ENCODE measurements at regions of chr13 and their contacts with region 1.

Region 1: DNA sequence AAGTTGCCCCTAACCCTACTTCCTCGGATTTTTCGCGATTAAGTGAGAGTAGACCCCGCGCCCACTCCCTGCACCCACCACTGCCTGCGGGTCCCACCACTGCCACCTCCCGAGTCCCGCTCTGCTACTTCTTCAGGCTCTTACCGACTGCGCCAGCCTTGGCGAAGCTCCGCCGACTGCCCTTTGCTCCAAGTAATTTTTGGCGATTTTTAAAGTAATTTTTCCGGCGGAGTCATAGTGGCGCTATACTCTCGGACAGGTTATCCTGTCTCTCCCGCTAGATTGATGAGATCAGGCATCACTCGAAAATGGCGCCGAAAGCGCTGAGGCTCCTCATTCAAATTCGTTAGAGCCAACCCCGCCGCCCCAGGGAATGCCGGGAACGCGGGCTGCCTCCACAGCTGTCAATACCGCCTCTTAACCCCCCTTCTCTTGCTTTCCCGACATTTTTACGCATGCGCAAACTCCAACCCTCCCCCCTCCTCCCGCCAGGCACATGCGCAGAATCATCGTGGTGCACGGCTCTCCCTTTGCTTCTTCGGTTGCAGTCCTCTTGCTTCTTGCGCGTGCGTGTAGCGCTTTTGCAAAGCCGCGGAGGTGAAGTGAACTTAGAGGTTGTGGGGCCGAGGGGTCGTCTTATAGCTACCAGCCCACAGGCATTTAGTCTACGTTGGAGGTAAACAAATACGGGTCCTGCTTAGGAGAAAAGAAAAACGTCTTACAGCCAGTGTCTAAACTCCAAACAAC is 66.6 kb downstream of the KCNRG start:
- DNase-seq: peak; percentile 99
- H3K4me3 Mint-ChIP-seq: peak overlapping the region; percentile 98
- H3K27ac Mint-ChIP-seq: peak overlapping the region; percentile 99
- H3K4me1 Mint-ChIP-seq: peaks cover 41% of the 10 kb centered on the region
- H3K27me3 Mint-ChIP-seq: no peaks in the 10 kb centered on the region

Region 2: DNA sequence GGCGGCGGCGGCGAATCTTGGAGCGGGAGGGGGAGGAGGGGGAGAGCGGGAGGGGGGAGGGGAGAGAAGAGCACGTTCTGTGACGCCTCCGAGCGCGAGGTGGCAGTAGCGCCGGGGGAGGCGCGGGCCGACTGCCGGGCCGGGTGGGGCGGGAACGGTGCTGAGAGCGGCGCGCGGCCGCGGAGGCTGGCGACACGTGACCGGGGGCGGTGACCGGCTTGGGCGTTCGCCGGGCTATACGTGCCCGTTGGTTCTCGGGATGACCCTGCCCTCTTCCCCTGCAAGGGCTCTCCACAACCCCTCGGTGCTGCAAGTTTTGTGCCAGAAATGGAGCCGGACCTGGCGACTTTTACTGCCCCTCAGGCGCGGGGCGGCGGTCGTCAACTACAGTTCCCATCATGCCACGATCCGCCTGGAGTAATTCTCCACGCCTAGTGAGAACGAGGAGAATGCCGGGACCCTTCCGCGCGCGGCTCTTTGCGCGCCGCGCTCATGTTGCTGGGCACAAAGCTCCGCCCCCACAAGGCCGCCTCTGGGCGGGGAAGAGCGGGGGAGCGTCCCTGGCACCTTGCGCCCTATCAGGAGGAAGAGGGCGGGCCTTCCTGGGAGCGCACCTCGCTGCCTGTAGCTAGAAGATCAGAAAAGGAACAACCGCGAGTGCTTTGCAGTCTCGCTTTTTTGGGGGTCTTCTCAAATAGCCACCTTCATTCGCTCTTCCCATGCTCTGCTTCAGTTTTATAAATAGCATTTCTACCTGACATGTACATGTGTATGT is 289.1 kb before region 1 on chr13 and contains the start of gene KPNA3:
- CTCF ChIA-PET with region 1: no interaction called
- POLR2A ChIA-PET with region 1: interaction called, 18 read pairs
- DNase-seq: peak; percentile 96
- H3K4me3 Mint-ChIP-seq: peak within 1 kb of the TSS; percentile 95
- H3K27ac Mint-ChIP-seq: peak within 1 kb of the TSS; percentile 97
- H3K4me1 Mint-ChIP-seq: peaks cover 32% of the 10 kb centered on the region
- H3K27me3 Mint-ChIP-seq: peaks cover 4% of the 10 kb centered on the region
- total RNA-seq, gene KPNA3: 34.9 to 36.1 TPM

Region 3: DNA sequence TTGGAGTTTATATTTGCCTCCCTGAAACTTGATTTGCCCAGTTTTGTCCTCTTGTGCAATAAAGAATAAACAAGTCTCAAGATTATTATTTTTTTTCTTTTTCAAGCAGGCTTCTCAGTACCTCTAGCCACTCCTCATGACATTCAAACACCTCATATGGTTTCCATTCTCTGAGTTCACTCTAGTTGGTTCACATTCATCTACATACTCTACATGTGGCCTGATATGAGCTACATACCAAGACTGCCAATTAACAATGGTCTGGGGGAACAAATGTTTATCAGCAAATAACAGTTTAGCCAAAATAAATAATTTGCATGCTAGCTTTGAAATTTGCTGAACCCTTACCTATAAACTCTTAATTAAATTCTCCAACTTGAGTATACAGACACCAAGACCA is 44.1 kb before region 1 on chr13:
- CTCF ChIA-PET with region 1: no interaction called
- POLR2A ChIA-PET with region 1: interaction called, 10 read pairs
- DNase-seq: no peak
- H3K4me3 Mint-ChIP-seq: no peak overlapping the region
- H3K27ac Mint-ChIP-seq: no peak overlapping the region
- H3K4me1 Mint-ChIP-seq: no peaks in the 10 kb centered on the region
- H3K27me3 Mint-ChIP-seq: no peaks in the 10 kb centered on the region

Region 4: DNA sequence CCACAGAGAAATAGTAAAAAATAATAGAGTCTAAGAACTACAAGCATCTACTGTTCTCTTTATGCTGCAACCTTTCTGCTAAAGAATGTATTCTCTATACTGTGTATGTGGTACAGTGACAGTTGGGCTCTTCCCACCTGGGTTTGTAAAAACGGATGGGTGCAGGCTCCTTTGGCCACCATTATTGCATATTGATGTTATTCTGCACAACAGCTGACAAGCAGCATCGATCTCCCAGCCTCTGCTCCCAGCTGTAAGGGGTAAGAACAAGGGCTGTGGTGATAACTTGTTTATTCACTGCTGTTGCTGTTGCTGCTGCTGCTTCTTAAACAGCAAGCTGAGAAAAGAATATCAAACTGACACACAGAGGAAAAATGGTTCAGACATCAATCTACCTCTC is 10.5 kb before region 1 on chr13:
- CTCF ChIA-PET with region 1: no interaction called
- POLR2A ChIA-PET with region 1: interaction called, 60 read pairs
- DNase-seq: no peak
- H3K4me3 Mint-ChIP-seq: no peak overlapping the region
- H3K27ac Mint-ChIP-seq: peak overlapping the region; percentile 7
- H3K4me1 Mint-ChIP-seq: peaks cover 40% of the 10 kb centered on the region
- H3K27me3 Mint-ChIP-seq: no peaks in the 10 kb centered on the region

Region 5: GRCh38 chr13:50801087-50801931 is 719.5 kb after region 1 on chr13:
- CTCF ChIA-PET with region 1: interaction called, 11 read pairs
- POLR2A ChIA-PET with region 1: interaction called, 4 read pairs
- DNase-seq: peak; percentile 70
- H3K4me3 Mint-ChIP-seq: no peak overlapping the region
- H3K27ac Mint-ChIP-seq: no peak overlapping the region
- H3K4me1 Mint-ChIP-seq: peaks cover 6% of the 10 kb centered on the region
- H3K27me3 Mint-ChIP-seq: peaks cover 9% of the 10 kb centered on the region

Region 6: GRCh38 chr13:50911937-50912795 is 830.3 kb after region 1 on chr13:
- CTCF ChIA-PET with region 1: interaction called, 30 read pairs
- POLR2A ChIA-PET with region 1: interaction called, 117 read pairs
- DNase-seq: peak; percentile 95
- H3K4me3 Mint-ChIP-seq: peak overlapping the region; percentile 88
- H3K27ac Mint-ChIP-seq: peak overlapping the region; percentile 89
- H3K4me1 Mint-ChIP-seq: peaks cover 61% of the 10 kb centered on the region
- H3K27me3 Mint-ChIP-seq: no peaks in the 10 kb centered on the region